ENCODE measurements at regions of chr1 and their contacts with region 1.

Region 1: GRCh38 chr1:51569284-51570062 is 47.4 kb upstream of the OSBPL9 start:
- DNase-seq: peak in 6 of 9 experiments; percentile 9 to 49 (median 29)
- ATAC-seq: peak; percentile 80
- H3K4me3 ChIP-seq: no peak overlapping the region
- H3K4me3 Mint-ChIP-seq: peak overlapping the region; percentile 33
- H3K27ac ChIP-seq: peak overlapping the region in 1 of 2 experiments; percentile 55
- H3K27ac Mint-ChIP-seq: peak overlapping the region; percentile 50
- H3K4me1 ChIP-seq: peaks cover 26% of the 10 kb centered on the region
- H3K4me1 Mint-ChIP-seq: peaks cover 27% of the 10 kb centered on the region
- H3K27me3 ChIP-seq: no peaks in the 10 kb centered on the region
- H3K27me3 Mint-ChIP-seq: no peaks in the 10 kb centered on the region
- CTCF ChIP-seq: no peak

Region 2: GRCh38 chr1:51472359-51472758 is 97.1 kb before region 1 on chr1:
- CTCF ChIA-PET with region 1: no interaction called
- POLR2A ChIA-PET with region 1: no interaction called
- intact Hi-C with region 1: no loop called
- DNase-seq: no peak
- ATAC-seq: no peak
- H3K4me3 ChIP-seq: no peak overlapping the region
- H3K4me3 Mint-ChIP-seq: no peak overlapping the region
- H3K27ac ChIP-seq: no peak overlapping the region
- H3K27ac Mint-ChIP-seq: no peak overlapping the region
- H3K4me1 ChIP-seq: no peaks in the 10 kb centered on the region
- H3K4me1 Mint-ChIP-seq: peaks cover 15% of the 10 kb centered on the region
- H3K27me3 ChIP-seq: no peaks in the 10 kb centered on the region
- H3K27me3 Mint-ChIP-seq: no peaks in the 10 kb centered on the region
- CTCF ChIP-seq: no peak

Region 3: GRCh38 chr1:51592711-51593110 is 23.2 kb after region 1 on chr1:
- CTCF ChIA-PET with region 1: no interaction called
- POLR2A ChIA-PET with region 1: no interaction called
- intact Hi-C with region 1: loop called in 1 of 2 experiments (anchors 1 kb)
- DNase-seq: no peak
- ATAC-seq: no peak
- H3K4me3 ChIP-seq: no peak overlapping the region
- H3K4me3 Mint-ChIP-seq: no peak overlapping the region
- H3K27ac ChIP-seq: no peak overlapping the region
- H3K27ac Mint-ChIP-seq: no peak overlapping the region
- H3K4me1 ChIP-seq: no peaks in the 10 kb centered on the region
- H3K4me1 Mint-ChIP-seq: no peaks in the 10 kb centered on the region
- H3K27me3 ChIP-seq: no peaks in the 10 kb centered on the region
- H3K27me3 Mint-ChIP-seq: no peaks in the 10 kb centered on the region
- CTCF ChIP-seq: no peak

Region 4: GRCh38 chr1:51616901-51617708 is 47.6 kb after region 1 on chr1 and contains the start of gene OSBPL9:
- CTCF ChIA-PET with region 1: interaction called, 3 read pairs
- POLR2A ChIA-PET with region 1: no interaction called
- intact Hi-C with region 1: loop called in 1 of 2 experiments (anchors 5 kb)
- DNase-seq: peak; percentile 78 to 94 (median 87)
- ATAC-seq: peak; percentile 93
- H3K4me3 ChIP-seq: peak within 1 kb of the TSS; percentile 90 to 98
- H3K4me3 Mint-ChIP-seq: peak within 1 kb of the TSS; percentile 100
- H3K27ac ChIP-seq: peak within 1 kb of the TSS; percentile 84
- H3K27ac Mint-ChIP-seq: peak within 1 kb of the TSS; percentile 99
- H3K4me1 ChIP-seq: peaks cover 23% of the 10 kb centered on the region
- H3K4me1 Mint-ChIP-seq: peaks cover 42% of the 10 kb centered on the region
- H3K27me3 ChIP-seq: no peaks in the 10 kb centered on the region
- H3K27me3 Mint-ChIP-seq: peaks cover under 1% of the 10 kb centered on the region
- CTCF ChIP-seq: no peak
- total RNA-seq, gene OSBPL9: 48.5 to 49.2 TPM

Measured in CD8-positive, alpha-beta T cell (primary cell).